ENCODE measurements at regions of chr19 and their contacts with region 1.

Region 1: DNA sequence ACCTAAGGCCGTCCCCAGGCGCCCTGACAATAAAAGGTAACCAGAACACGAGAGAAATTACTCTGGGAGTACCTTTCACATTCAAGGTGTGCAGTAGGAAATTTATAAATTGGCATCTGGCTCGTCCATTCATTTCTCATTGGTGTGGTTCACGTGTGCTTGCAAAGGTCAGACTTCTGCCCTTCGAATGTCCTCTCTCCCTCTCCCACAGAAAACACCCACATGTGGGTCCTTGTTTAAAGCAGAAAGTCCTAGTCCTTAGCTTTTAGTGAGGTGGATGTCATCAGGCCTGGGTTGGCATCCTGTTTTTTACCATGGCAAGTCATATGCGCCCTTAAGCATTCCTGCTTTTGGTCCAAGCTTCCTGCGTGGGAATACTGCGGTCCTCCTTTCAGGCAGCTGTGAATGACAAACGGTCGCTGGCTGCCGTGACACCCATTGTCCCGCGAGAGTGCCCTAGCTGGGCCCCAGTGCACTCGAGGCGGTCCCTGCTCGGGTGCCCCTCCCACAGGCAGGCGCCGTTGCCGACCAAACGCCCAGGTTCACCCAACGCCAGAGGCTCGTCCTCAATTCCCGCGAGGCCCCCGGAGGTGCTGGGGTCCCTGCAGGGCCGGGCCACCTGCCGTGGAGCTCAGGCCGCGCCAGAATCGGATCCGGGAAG is at the start of gene NUDT19:
- DNase-seq: peak; percentile 50 to 82 (median 62)
- ATAC-seq: peak; percentile 87
- H3K4me3 ChIP-seq: peak within 1 kb of the TSS; percentile 50
- H3K4me3 Mint-ChIP-seq: peak within 1 kb of the TSS; percentile 83 to 97 (median 92)
- H3K27ac ChIP-seq: peak within 1 kb of the TSS; percentile 68
- H3K27ac Mint-ChIP-seq: peak within 1 kb of the TSS; percentile 37 to 93 (median 85)
- H3K4me1 ChIP-seq: peaks cover 20 to 24% of the 10 kb centered on the region in 2 donors
- H3K4me1 Mint-ChIP-seq: peaks cover 35 to 52% (median 47%) of the 10 kb centered on the region in 7 donors
- H3K27me3 ChIP-seq: no peaks in the 10 kb centered on the region
- H3K27me3 Mint-ChIP-seq: no peaks in the 10 kb centered on the region
- total RNA-seq, gene NUDT19: 8.4 to 17.0 (median 9.0) TPM

Region 2: DNA sequence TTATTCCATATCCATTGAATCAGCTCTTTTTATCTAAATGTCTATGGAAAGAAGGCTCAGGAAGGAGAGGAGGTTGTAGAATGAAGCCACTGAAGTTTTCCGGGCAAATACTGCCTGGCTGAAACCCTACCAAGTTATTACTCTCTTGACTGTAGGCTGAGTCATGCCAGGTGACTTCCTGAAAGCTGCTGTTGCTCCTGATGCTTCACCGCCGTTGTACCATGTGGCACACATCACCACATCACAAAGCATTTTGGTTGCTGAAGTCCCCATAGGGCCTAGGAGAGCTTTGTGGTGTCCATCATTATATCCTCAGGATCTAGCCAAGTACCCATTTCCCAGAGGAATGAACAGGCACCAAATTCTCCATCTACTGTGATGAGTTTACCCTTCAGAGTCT is 17.0 kb after region 1 on chr19:
- CTCF ChIA-PET with region 1: no interaction called
- POLR2A ChIA-PET with region 1: no interaction called
- intact Hi-C with region 1: loop called in 1 of 2 experiments (anchors 1 kb)
- DNase-seq: peak in 4 of 9 donors; percentile 10 to 31 (median 29)
- ATAC-seq: peak; percentile 57
- H3K4me3 ChIP-seq: no peak overlapping the region
- H3K4me3 Mint-ChIP-seq: peak overlapping the region in 4 of 10 donors; percentile 0 to 37 (median 24)
- H3K27ac ChIP-seq: no peak overlapping the region
- H3K27ac Mint-ChIP-seq: peak overlapping the region in 6 of 9 donors; percentile 15 to 64 (median 52)
- H3K4me1 ChIP-seq: no peaks in the 10 kb centered on the region
- H3K4me1 Mint-ChIP-seq: peaks cover 9 to 24% (median 20%) of the 10 kb centered on the region in 7 donors
- H3K27me3 ChIP-seq: no peaks in the 10 kb centered on the region
- H3K27me3 Mint-ChIP-seq: no peaks in the 10 kb centered on the region

Region 3: GRCh38 chr19:32798201-32798600 is 106.8 kb after region 1 on chr19:
- CTCF ChIA-PET with region 1: no interaction called
- POLR2A ChIA-PET with region 1: interaction called, 4 read pairs
- intact Hi-C with region 1: loop called (anchors 1 to 5 kb)
- DNase-seq: no peak
- ATAC-seq: no peak
- H3K4me3 ChIP-seq: no peak overlapping the region
- H3K4me3 Mint-ChIP-seq: no peak overlapping the region
- H3K27ac ChIP-seq: no peak overlapping the region
- H3K27ac Mint-ChIP-seq: peak overlapping the region in 1 of 9 donors; percentile 10
- H3K4me1 ChIP-seq: peaks cover 21 to 42% of the 10 kb centered on the region in 2 donors
- H3K4me1 Mint-ChIP-seq: peaks cover 26 to 82% (median 69%) of the 10 kb centered on the region in 7 donors
- H3K27me3 ChIP-seq: no peaks in the 10 kb centered on the region
- H3K27me3 Mint-ChIP-seq: peaks cover 0 to 5% (median 0%) of the 10 kb centered on the region in 5 donors

Region 4: GRCh38 chr19:33080761-33081681 is 389.6 kb after region 1 on chr19 and contains the start of gene GPATCH1:
- CTCF ChIA-PET with region 1: no interaction called
- POLR2A ChIA-PET with region 1: no interaction called
- intact Hi-C with region 1: loop called in 1 of 2 experiments (anchors 2 kb)
- DNase-seq: peak; percentile 79 to 92 (median 85)
- ATAC-seq: peak; percentile 99
- H3K4me3 ChIP-seq: peak within 1 kb of the TSS; percentile 98
- H3K4me3 Mint-ChIP-seq: peak within 1 kb of the TSS; percentile 92 to 99 (median 94)
- H3K27ac ChIP-seq: peak within 1 kb of the TSS; percentile 84
- H3K27ac Mint-ChIP-seq: peak within 1 kb of the TSS; percentile 89 to 99 (median 94)
- H3K4me1 ChIP-seq: peaks cover 10 to 11% of the 10 kb centered on the region in 2 donors
- H3K4me1 Mint-ChIP-seq: peaks cover 20 to 39% (median 30%) of the 10 kb centered on the region in 7 donors
- H3K27me3 ChIP-seq: no peaks in the 10 kb centered on the region
- H3K27me3 Mint-ChIP-seq: no peaks in the 10 kb centered on the region
- total RNA-seq, gene GPATCH1: 11.2 to 20.0 (median 14.4) TPM

Region 5: DNA sequence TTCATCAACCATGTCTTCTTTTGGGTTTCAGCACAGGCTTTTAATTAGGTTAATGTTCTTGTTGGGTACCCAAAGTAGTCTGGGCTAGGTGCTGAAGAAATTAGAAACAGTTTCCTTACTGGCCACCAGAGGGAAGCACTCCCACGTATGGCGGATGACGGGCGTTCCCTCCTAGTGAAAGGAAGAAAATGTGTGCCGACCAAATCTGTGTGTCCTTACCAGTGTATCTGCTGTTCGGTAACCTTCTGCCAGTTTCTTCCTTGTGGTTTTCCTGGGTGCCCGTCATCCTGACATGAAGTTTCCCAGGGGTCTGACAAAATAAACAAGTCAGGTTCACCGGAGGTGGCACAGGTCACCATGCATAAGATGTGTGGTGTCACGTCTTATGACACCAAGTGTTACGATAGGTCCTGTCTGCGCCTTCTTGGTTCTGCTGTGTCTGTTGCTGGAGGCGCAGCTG is 434.5 kb after region 1 on chr19:
- CTCF ChIA-PET with region 1: no interaction called
- POLR2A ChIA-PET with region 1: no interaction called
- intact Hi-C with region 1: loop called in 1 of 2 experiments (anchors 5 kb)
- DNase-seq: peak; percentile 14 to 68 (median 55)
- ATAC-seq: peak; percentile 96
- H3K4me3 ChIP-seq: no peak overlapping the region
- H3K4me3 Mint-ChIP-seq: no peak overlapping the region
- H3K27ac ChIP-seq: no peak overlapping the region
- H3K27ac Mint-ChIP-seq: peak overlapping the region in 4 of 9 donors; percentile 34 to 71 (median 60)
- H3K4me1 ChIP-seq: no peaks in the 10 kb centered on the region
- H3K4me1 Mint-ChIP-seq: peaks cover 0 to 9% (median 7%) of the 10 kb centered on the region in 7 donors
- H3K27me3 ChIP-seq: no peaks in the 10 kb centered on the region
- H3K27me3 Mint-ChIP-seq: no peaks in the 10 kb centered on the region

Measured in naive thymus-derived CD4-positive, alpha-beta T cell (primary cell).